Ascending aorta (tissue), 2 donors: ENCODE measurements at regions of chr21 and their contacts with region 1.

Region 1: GRCh38 chr21:44982558-44983244 is 42.9 kb downstream of the SLX9 start:
- DNase-seq: peak; percentile 43 to 94
- H3K4me3 ChIP-seq: peak overlapping the region in 1 of 2 donors; percentile 19
- H3K27ac ChIP-seq: peak overlapping the region; percentile 84 to 86
- H3K4me1 ChIP-seq: peaks cover 8 to 17% of the 10 kb centered on the region in 2 donors
- H3K27me3 ChIP-seq: no peaks in the 10 kb centered on the region
- CTCF ChIP-seq: no peak

Region 2: GRCh38 chr21:44962403-44962966 is 20.2 kb before region 1 on chr21:
- intact Hi-C with region 1: loop called (anchors 1 kb)
- DNase-seq: peak in 1 of 2 donors; percentile 91
- H3K4me3 ChIP-seq: no peak overlapping the region
- H3K27ac ChIP-seq: peak overlapping the region; percentile 84 to 90
- H3K4me1 ChIP-seq: peaks cover 38 to 74% of the 10 kb centered on the region in 2 donors
- H3K27me3 ChIP-seq: no peaks in the 10 kb centered on the region
- CTCF ChIP-seq: no peak

Region 3: GRCh38 chr21:45019076-45019956 is 36.6 kb after region 1 on chr21:
- intact Hi-C with region 1: loop called (anchors 2 kb)
- DNase-seq: peak; percentile 22 to 90
- H3K4me3 ChIP-seq: peak overlapping the region; percentile 44 to 63
- H3K27ac ChIP-seq: peak overlapping the region; percentile 93 to 95
- H3K4me1 ChIP-seq: peaks cover 8 to 31% of the 10 kb centered on the region in 2 donors
- H3K27me3 ChIP-seq: no peaks in the 10 kb centered on the region
- CTCF ChIP-seq: no peak